Activated CD8-positive, alpha-beta T cell treated with anti-CD3 and anti-CD28 coated beads, Interleukin-2, amount 10 ng/mL, durations not matched to agents 7 days and 5 days (primary cell): ENCODE measurements at regions of chr11 and their contacts with region 1.

Region 1: DNA sequence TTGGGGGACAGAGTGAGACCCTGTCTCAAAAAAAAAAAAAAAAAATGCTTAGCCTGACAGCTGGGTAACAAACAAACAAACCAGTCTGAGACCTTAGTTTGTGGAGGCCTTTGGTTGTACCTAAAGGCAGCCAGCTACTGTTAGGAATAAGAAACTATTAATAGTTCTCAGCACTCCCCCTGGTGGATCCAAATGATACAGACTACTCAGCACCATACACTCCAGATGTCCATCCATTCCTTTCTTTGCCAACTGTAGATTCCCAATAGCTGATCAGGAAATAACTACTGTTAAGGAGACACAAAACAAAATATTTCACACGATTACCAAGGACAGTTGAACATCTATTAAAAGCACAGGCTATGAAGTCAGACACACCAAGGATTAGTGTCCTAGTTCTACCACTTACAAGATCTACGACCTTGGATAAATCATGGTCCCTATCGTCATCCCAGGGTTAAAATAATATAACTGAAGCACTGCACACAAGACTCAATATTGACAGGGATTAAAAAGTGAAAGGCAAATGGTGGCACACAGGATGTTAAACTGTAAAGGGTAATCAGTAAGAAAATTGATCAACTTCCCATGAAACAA is 17.2 kb downstream of the CLDN25 start:
- DNase-seq: peak; percentile 30
- ATAC-seq: peak; percentile 77
- H3K4me3 Mint-ChIP-seq: no peak overlapping the region
- H3K27ac Mint-ChIP-seq: no peak overlapping the region
- H3K4me1 Mint-ChIP-seq: no peaks in the 10 kb centered on the region
- H3K27me3 Mint-ChIP-seq: no peaks in the 10 kb centered on the region

Region 2: DNA sequence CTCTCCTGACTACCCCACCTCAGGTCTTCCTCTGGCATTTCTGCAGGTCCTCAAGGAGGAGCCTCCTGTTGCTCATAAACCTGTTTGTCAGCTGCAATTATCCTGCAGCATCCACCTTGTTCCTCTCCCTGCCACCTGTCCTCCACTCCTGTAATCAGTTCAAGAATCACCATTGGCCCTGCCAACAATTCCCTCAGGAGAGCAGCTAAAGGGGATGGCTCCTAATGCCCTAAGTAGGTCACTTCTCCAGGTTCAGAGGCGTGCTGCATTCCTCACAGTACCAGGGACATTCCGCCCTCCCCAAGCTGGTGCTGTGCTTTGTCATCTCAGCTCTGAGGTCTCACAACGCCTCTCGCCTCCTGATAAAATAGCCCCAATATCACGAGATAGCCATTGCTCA is 15.1 kb before region 1 on chr11:
- CTCF ChIA-PET with region 1: interaction called, 12 read pairs
- POLR2A ChIA-PET with region 1: no interaction called
- DNase-seq: no peak
- ATAC-seq: no peak
- H3K4me3 Mint-ChIP-seq: no peak overlapping the region
- H3K27ac Mint-ChIP-seq: no peak overlapping the region
- H3K4me1 Mint-ChIP-seq: peaks cover 2% of the 10 kb centered on the region
- H3K27me3 Mint-ChIP-seq: peaks cover 35% of the 10 kb centered on the region

Region 3: GRCh38 chr11:113839842-113840241 is 43.1 kb after region 1 on chr11:
- CTCF ChIA-PET with region 1: no interaction called
- POLR2A ChIA-PET with region 1: no interaction called
- DNase-seq: no peak
- ATAC-seq: no peak
- H3K4me3 Mint-ChIP-seq: no peak overlapping the region
- H3K27ac Mint-ChIP-seq: no peak overlapping the region
- H3K4me1 Mint-ChIP-seq: peaks cover 13% of the 10 kb centered on the region
- H3K27me3 Mint-ChIP-seq: no peaks in the 10 kb centered on the region